ENCODE measurements at regions of chr9 and their contacts with region 1.

Region 1: GRCh38 chr9:38068866-38069629 is at the start of gene SHB:
- DNase-seq: peak; percentile 88
- H3K4me3 ChIP-seq: peak within 1 kb of the TSS; percentile 59 to 99 (median 76)
- H3K27ac ChIP-seq: peak within 1 kb of the TSS; percentile 82 to 95 (median 92)
- H3K4me1 ChIP-seq: peaks cover 3 to 50% (median 33%) of the 10 kb centered on the region in 4 donors
- H3K27me3 ChIP-seq: no peaks in the 10 kb centered on the region
- CTCF ChIP-seq: peak in 3 of 4 experiments; percentile 15 to 55 (median 49)
- EP300 ChIP-seq: no peak
- POLR2A ChIP-seq: no peak
- total RNA-seq, gene SHB: 6.8 to 33.7 (median 10.3) TPM

Region 2: DNA sequence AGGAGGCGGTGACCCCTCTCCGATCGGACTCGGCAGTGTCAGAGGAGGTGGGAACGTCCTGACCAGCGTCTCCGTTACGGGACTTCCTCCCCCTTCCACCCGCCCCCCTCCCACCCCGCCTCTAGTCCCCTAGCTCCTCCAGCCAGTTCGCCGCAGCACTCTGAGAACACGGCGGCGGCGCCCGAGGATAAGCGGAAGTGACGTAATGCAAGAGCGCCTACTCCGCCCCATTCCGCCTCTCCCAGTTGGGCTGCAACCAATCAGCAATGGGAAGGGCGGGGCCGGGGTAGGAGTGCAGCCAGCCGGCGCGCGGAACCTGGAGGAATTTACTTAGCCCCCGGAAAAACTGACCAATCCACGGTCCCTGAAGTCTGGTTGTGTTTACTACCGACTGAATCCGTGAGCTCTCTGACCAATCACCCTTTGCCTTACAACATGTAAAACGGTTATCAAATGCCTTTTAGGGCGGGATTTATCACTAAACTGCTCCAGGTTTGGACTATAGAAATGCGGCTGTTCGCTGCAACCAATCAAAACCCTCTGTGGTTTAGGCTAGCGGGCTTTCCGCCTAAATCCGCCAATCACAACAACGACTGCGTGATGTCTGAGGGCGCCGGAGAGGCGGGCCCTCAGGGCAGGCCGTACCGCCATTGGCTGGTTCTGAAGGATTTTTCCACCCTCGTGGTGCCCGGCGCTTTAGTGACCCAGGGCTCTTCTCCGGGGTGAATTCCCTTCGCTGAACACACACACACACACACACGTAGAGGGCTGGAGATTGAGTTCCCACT is 603.6 kb before region 1 on chr9 and contains the start of gene ZBTB5:
- intact Hi-C with region 1: loop called (anchors 10 kb)
- DNase-seq: peak; percentile 100
- H3K4me3 ChIP-seq: peak within 1 kb of the TSS; percentile 82 to 99 (median 88)
- H3K27ac ChIP-seq: peak within 1 kb of the TSS; percentile 99 to 100 (median 100)
- H3K4me1 ChIP-seq: peaks cover 0 to 44% (median 39%) of the 10 kb centered on the region in 4 donors
- H3K27me3 ChIP-seq: no peaks in the 10 kb centered on the region
- CTCF ChIP-seq: no peak
- EP300 ChIP-seq: peak in 1 of 4 donors; percentile 25
- POLR2A ChIP-seq: peak; percentile 80 to 89
- total RNA-seq, gene ZBTB5: 7.2 to 11.1 (median 10.2) TPM

Region 3: DNA sequence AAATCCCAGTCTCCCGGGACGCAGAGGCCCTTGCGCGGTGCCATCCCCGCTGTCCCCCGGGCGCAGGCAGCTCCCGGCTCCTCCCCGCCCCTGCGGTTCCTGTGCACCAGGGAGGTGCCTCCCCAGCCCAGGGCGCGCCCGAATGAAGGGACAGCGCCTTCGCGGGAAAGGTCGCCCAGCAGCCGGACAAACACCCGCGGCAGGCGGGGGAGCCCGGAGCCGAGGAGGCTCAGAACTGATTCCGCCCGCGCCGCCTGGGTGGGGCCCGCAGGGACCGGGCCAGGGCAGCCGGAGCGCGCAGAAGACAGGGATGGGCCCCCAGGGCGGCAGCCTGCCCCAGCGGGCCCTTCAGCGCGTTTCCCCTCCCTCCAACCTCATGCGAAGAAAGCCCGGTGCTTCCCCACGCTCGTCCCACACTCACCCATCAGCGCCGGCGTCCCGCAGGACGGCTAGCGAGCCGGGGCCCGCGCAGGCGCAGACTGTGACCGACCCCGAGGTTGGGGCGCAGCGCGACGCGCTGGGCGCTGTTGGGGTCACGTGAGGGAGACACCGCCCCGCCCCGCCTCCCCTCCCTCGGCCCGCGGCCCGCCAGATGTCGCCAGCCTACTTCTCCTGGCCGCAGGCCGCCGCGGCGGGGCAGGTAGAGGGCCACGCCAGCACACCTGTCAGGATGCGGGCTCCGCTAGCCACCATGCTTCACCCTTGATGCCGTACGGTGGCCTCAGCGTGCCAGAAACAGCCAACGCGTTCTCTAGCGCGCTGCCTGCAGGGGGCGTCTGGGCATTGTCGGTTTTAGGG is 165.2 kb before region 1 on chr9 and contains the start of gene SLC25A51:
- intact Hi-C with region 1: loop called (anchors 2 kb)
- DNase-seq: peak; percentile 97
- H3K4me3 ChIP-seq: peak within 1 kb of the TSS; percentile 68 to 92 (median 92)
- H3K27ac ChIP-seq: peak within 1 kb of the TSS; percentile 83 to 95 (median 92)
- H3K4me1 ChIP-seq: peaks cover 0 to 28% (median 24%) of the 10 kb centered on the region in 4 donors
- H3K27me3 ChIP-seq: no peaks in the 10 kb centered on the region
- CTCF ChIP-seq: peak; percentile 85 to 98 (median 93)
- EP300 ChIP-seq: no peak
- POLR2A ChIP-seq: peak; percentile 9 to 54
- total RNA-seq, gene SLC25A51: 19.3 to 31.0 (median 27.3) TPM

Region 4: DNA sequence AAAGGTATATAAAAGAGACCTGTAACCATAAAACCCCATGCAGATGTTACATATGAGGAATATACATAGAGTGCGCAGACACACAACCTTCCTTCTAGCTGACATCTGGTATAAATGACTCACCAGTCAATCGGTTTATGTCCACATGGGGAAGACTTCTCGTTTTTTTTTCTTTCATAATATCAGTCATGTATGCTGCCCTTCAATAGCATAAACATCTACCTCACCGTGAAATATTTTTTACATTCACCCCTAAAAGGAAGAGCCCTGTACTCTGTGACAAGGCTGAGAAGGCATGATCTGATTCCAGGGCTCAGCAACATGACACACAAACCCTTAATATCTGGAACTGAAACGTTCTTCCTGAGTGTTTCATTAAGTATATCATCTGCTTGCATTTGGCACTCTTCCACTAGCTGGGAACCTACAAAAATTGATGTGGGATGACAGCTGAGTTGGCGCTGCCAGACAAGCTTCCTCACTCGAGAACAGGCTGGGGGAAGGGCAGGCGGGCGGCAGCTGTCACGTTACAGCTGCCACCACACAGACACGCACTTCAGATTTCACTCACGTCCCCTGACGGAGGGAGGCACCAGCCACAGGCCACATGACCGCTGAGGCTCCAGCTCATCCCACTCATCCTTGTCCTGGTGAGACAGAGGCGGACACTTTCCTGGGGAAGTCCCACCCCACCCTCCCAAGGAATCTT is 74.3 kb before region 1 on chr9:
- intact Hi-C with region 1: loop called (anchors 2 kb)
- DNase-seq: peak; percentile 87
- H3K4me3 ChIP-seq: peak overlapping the region in 2 of 4 donors; percentile 6 to 17
- H3K27ac ChIP-seq: peak overlapping the region; percentile 64 to 87 (median 76)
- H3K4me1 ChIP-seq: peaks cover 0 to 60% (median 45%) of the 10 kb centered on the region in 4 donors
- H3K27me3 ChIP-seq: no peaks in the 10 kb centered on the region
- CTCF ChIP-seq: no peak
- EP300 ChIP-seq: peak in 2 of 4 donors; percentile 34 to 40
- POLR2A ChIP-seq: no peak

Region 5: DNA sequence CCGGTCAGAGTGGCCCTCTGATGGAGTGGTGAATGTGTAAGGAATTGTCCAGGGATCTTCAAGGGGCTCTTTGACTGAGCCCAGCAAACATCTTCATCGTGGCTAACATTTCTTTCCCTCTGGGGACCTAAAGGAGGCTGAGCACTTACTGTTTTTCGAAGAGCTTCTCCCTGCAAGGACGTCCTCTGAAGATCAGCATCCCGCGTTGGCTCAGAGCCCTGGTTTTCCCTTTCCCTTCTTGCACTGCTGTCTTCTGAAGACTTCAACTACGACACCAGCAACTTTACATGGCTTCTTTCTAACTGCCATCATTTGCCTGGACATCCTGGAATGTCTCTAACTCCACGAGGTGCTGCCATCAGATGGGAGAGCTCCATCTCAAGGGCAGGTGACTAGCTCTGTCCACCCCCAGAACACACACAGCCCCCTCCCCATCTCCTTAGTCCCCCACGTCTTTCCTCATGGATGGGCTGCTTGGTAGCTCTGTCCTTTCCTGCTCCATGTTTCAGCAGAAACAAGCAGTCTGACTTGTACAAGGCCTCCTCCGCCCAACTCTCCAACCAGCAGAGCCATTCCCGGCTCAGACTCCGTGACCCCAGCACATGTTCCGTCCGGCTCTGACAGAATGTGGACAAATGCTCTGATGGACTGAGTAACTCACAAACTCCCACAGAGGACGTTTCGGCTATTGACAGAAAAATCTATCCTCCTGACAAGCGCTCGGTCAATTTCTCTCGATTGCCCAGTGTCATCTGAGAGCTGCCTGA is 17.1 kb before region 1 on chr9:
- intact Hi-C with region 1: loop called (anchors 2 kb)
- DNase-seq: no peak
- H3K4me3 ChIP-seq: no peak overlapping the region
- H3K27ac ChIP-seq: peak overlapping the region in 2 of 4 donors; percentile 1 to 26
- H3K4me1 ChIP-seq: peaks cover 0 to 23% (median 19%) of the 10 kb centered on the region in 4 donors
- H3K27me3 ChIP-seq: no peaks in the 10 kb centered on the region
- CTCF ChIP-seq: no peak
- EP300 ChIP-seq: no peak
- POLR2A ChIP-seq: no peak

Region 6: DNA sequence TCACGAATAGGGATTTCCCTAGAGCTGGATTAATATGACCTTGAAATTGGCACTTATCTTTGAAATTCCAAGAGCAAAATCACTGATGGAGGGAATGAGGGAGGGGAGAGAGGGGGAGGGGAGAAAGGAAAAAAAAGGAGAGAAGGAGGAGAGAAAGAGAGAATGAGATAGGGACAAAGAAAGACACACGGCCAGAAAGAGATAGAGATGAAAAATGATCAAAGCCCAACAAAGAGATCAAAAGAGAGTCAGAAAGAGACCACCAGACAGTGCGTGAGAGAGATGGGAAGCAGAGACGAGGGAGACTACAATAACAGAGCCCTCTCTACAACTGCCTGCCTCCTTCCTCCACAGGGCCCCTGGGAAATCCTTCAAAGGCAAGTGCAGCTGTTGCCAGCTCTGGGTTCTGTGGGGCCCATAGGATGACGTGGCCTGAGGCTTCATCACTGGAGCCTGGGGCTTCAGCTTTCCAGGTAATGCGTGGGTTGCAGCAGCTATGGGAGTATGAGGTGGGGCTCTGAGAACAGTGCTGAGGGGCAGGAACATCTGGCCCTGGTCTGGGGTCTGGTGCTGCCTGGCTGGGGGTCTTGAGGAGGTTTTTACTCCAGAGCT is 58.3 kb after region 1 on chr9:
- intact Hi-C with region 1: no loop called
- DNase-seq: no peak
- H3K4me3 ChIP-seq: no peak overlapping the region
- H3K27ac ChIP-seq: no peak overlapping the region
- H3K4me1 ChIP-seq: no peaks in the 10 kb centered on the region
- H3K27me3 ChIP-seq: no peaks in the 10 kb centered on the region
- CTCF ChIP-seq: no peak
- EP300 ChIP-seq: no peak
- POLR2A ChIP-seq: no peak

Region 7: DNA sequence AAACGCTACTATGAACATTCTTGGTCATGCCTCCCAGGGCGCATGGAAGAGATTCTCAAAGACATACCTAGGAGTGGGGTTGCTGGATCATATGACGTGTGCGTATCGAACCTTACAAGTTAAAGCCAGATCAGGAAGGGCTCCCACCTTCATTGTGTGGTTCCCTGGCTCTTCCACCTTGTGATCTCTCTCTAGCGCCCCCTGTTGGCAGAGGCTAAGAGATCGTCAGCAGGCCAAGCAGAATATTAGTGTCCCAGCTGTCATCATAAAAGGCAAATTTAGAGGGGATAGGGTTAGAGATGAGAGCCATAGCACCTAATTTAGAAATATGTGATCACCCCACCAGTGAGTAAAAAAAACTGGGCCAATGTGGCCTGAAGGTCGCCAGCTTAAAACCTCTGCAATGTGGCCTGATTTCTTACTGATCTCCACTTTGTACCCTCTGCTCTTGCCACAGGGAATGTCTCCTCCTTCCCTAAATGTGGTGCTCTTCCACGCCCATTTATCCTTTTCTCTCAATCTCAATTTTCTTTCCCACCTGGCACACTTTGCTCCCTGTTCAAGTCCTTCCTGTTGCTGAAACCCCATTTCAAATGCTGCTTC is 91.7 kb after region 1 on chr9:
- intact Hi-C with region 1: no loop called
- DNase-seq: peak; percentile 70
- H3K4me3 ChIP-seq: no peak overlapping the region
- H3K27ac ChIP-seq: no peak overlapping the region
- H3K4me1 ChIP-seq: no peaks in the 10 kb centered on the region
- H3K27me3 ChIP-seq: no peaks in the 10 kb centered on the region
- CTCF ChIP-seq: peak; percentile 37 to 77 (median 60)
- EP300 ChIP-seq: no peak
- POLR2A ChIP-seq: no peak

Measured in sigmoid colon (tissue), 7 donors.